Head of caudate nucleus (tissue), 42 donors: ENCODE measurements at regions of chr2 and their contacts with region 1.

Region 1: GRCh38 chr2:134411828-134412638 is 158.2 kb downstream of the MGAT5 start:
- DNase-seq: peak; percentile 65 to 96 (median 89)

Region 2: DNA sequence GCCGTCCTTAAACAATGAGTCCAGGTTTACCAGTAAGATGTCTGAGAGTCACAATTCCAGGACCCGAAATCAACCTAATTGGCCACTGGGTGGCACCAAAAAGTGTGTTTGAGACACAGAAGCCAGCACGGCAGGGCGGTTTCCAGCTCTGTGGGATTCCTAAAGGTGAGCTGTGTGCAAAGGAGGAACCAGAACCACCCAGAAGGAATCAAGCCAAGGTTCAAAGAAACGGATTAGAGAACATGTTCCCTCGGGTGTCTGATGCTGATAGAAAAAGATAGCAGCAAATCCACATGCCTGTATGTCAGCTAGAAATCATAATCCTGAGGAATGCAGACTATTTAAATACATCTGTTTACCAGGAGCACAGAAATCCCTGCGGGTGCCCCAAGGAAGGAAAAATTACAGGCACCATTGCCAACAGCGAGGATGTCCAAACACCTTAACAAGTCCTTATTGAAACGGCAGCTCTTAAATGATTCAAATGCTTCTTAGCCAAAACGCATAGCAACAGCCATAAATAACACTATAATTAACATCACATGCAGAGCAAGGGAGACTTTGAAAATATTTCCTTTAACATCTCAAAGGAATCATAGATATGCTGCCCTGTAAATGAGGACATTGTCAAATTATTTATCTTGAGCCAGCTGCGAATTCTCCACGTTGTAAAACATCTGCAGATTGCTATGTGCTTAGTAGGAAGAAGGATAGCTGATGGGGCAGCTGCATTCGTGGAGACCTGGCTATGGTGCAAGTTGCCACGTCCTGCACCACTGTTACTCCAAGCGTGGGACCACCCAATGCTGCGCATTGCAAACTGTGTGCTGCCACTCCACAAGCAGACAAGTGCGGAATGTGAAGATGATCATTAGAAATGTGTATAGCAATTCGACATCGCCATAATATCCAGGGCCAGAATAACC is 525.0 kb before region 1 on chr2:
- intact Hi-C with region 1: loop called (anchors 10 kb)
- DNase-seq: peak; percentile 68 to 92 (median 82)